GM12878 (cell line): ENCODE measurements at regions of chr21 and their contacts with region 1.

Region 1: DNA sequence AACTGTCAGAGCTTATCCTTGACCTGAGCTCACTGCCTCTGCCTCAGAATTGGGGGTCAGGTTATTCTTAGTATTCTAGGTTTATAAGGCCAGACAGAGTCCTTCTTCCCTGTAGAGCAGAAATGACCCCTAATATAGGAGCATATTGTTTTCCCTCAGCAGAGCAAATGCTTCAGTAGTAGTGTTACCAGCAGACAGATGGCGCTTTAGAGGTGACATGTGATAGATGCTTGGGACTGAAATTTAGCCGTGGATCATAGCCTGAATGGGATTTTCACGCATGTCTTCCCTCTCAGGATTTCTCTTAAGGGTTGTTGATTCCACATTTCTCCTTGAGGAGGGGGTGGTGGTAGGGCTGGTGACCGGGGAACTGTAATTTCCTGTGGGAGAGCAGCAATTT is 24.5 kb downstream of the ADARB1 start:
- DNase-seq: no peak
- ATAC-seq: peak; percentile 77
- H3K4me3 ChIP-seq: no peak overlapping the region
- H3K27ac ChIP-seq: no peak overlapping the region
- H3K4me1 ChIP-seq: peaks cover under 1% of the 10 kb centered on the region
- H3K27me3 ChIP-seq: no peaks in the 10 kb centered on the region; a peak in 1 of 4 replicates
- CTCF ChIP-seq: peak; percentile 59 to 63 (median 62)
- EP300 ChIP-seq: no peak
- POLR2A ChIP-seq: no peak
- RAD21 ChIP-seq: peak; percentile 61

Region 2: GRCh38 chr21:44939532-44940115 is 159.2 kb before region 1 on chr21 and contains the start of gene SLX9:
- CTCF ChIA-PET with region 1: interaction called, 18 read pairs
- POLR2A ChIA-PET with region 1: no interaction called
- RAD21 ChIA-PET with region 1: no interaction called
- SMC1A ChIA-PET with region 1: no interaction called
- in situ Hi-C with region 1: no loop called
- intact Hi-C with region 1: no loop called
- DNase-seq: no peak
- ATAC-seq: peak; percentile 92
- H3K4me3 ChIP-seq: peak within 1 kb of the TSS; percentile 92
- H3K27ac ChIP-seq: peak within 1 kb of the TSS; percentile 50
- H3K4me1 ChIP-seq: peaks cover 18% of the 10 kb centered on the region
- H3K27me3 ChIP-seq: no peaks in the 10 kb centered on the region
- CTCF ChIP-seq: no peak
- EP300 ChIP-seq: no peak
- POLR2A ChIP-seq: peak; percentile 88
- RAD21 ChIP-seq: no peak
- polyA plus RNA-seq, gene SLX9: 0.69 to 5.5 TPM

Region 3: GRCh38 chr21:45074048-45074817 is 24.6 kb before region 1 on chr21 and contains the start of gene ADARB1:
- CTCF ChIA-PET with region 1: interaction called, 49 read pairs
- POLR2A ChIA-PET with region 1: interaction called, 6 read pairs
- RAD21 ChIA-PET with region 1: interaction called, 6 read pairs
- SMC1A ChIA-PET with region 1: interaction called, 35 read pairs
- in situ Hi-C with region 1: no loop called
- intact Hi-C with region 1: no loop called
- DNase-seq: no peak
- ATAC-seq: peak; percentile 43
- H3K4me3 ChIP-seq: peak within 1 kb of the TSS; percentile 80; the same call in 1 of the 2 replicates
- H3K27ac ChIP-seq: no peak within 1 kb of the TSS
- H3K4me1 ChIP-seq: 0 out of 2 replicates have a peak, but pooled peaks cover 5% of the 10 kb centered on the region
- H3K27me3 ChIP-seq: peaks cover 0 to 9% of the 10 kb centered on the region in 2 experiments; a peak in 2 of 4 replicates
- CTCF ChIP-seq: no peak
- EP300 ChIP-seq: no peak
- POLR2A ChIP-seq: peak; percentile 76
- RAD21 ChIP-seq: no peak
- polyA plus RNA-seq, gene ADARB1: 5.7 to 9.0 TPM

Region 4: GRCh38 chr21:45109831-45110492 is 11.1 kb after region 1 on chr21:
- CTCF ChIA-PET with region 1: interaction called, 28 read pairs
- POLR2A ChIA-PET with region 1: interaction called, 3 read pairs
- RAD21 ChIA-PET with region 1: interaction called, 7 read pairs
- SMC1A ChIA-PET with region 1: interaction called, 9 read pairs
- in situ Hi-C with region 1: no loop called
- intact Hi-C with region 1: no loop called
- DNase-seq: peak; percentile 94
- ATAC-seq: peak; percentile 82
- H3K4me3 ChIP-seq: peak overlapping the region; percentile 54; the same call in 1 of the 2 replicates
- H3K27ac ChIP-seq: peak overlapping the region; percentile 74
- H3K4me1 ChIP-seq: peaks cover 42% of the 10 kb centered on the region
- H3K27me3 ChIP-seq: no peaks in the 10 kb centered on the region; a peak in 1 of 4 replicates
- CTCF ChIP-seq: no peak; a peak in 1 of 6 replicates
- EP300 ChIP-seq: peak; percentile 82 to 98; a peak in 3 of 4 replicates
- POLR2A ChIP-seq: no peak
- RAD21 ChIP-seq: peak; percentile 19; the same call in 1 of the 2 replicates

Region 5: DNA sequence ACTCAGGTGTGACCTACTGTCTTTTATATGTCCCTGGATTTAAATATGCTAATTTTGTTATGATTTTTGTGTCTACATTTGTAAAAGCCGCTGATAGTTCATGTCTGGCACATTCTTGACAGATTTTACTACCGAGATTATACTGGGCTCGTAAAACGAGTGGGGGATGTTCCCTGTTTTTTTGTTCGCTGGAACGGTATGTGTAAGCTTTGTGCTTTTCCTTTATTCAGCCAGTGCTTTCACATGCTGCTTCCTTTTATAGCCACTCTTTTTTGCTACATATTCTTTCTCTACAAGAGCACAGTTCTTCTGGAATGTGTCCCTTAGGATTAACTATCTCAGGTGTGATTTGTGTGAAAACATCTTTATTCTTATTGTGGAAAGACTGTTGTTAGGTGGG is 22.1 kb after region 1 on chr21:
- CTCF ChIA-PET with region 1: interaction called, 626 read pairs
- POLR2A ChIA-PET with region 1: interaction called, 6 read pairs
- RAD21 ChIA-PET with region 1: interaction called, 204 read pairs
- SMC1A ChIA-PET with region 1: interaction called, 560 read pairs
- in situ Hi-C with region 1: no loop called
- intact Hi-C with region 1: no loop called
- DNase-seq: no peak
- ATAC-seq: no peak
- H3K4me3 ChIP-seq: no peak overlapping the region
- H3K27ac ChIP-seq: no peak overlapping the region
- H3K4me1 ChIP-seq: peaks cover 18% of the 10 kb centered on the region
- H3K27me3 ChIP-seq: no peaks in the 10 kb centered on the region
- CTCF ChIP-seq: no peak
- EP300 ChIP-seq: no peak
- POLR2A ChIP-seq: no peak
- RAD21 ChIP-seq: no peak

Region 6: GRCh38 chr21:45179568-45180245 is 80.8 kb after region 1 on chr21:
- CTCF ChIA-PET with region 1: no interaction called
- POLR2A ChIA-PET with region 1: no interaction called
- RAD21 ChIA-PET with region 1: no interaction called
- SMC1A ChIA-PET with region 1: no interaction called
- in situ Hi-C with region 1: no loop called
- intact Hi-C with region 1: no loop called
- DNase-seq: no peak
- ATAC-seq: no peak
- H3K4me3 ChIP-seq: no peak overlapping the region
- H3K27ac ChIP-seq: no peak overlapping the region
- H3K4me1 ChIP-seq: no peaks in the 10 kb centered on the region
- H3K27me3 ChIP-seq: no peaks in the 10 kb centered on the region
- CTCF ChIP-seq: no peak
- EP300 ChIP-seq: no peak
- POLR2A ChIP-seq: no peak
- RAD21 ChIP-seq: no peak